Left lung (tissue), 14 donors: ENCODE measurements at regions of chr17 and their contacts with region 1.

Region 1: GRCh38 chr17:67386965-67387551 is 10.0 kb downstream of the PITPNC1 start:
- DNase-seq: peak in 2 of 4 donors; percentile 59 to 87
- ATAC-seq: peak; percentile 77
- H3K4me3 ChIP-seq: no peak overlapping the region
- H3K27ac ChIP-seq: no peak overlapping the region
- H3K4me1 ChIP-seq: peaks cover 0 to 22% of the 10 kb centered on the region in 2 donors
- H3K27me3 ChIP-seq: no peaks in the 10 kb centered on the region
- CTCF ChIP-seq: peak; percentile 60 to 66

Region 2: DNA sequence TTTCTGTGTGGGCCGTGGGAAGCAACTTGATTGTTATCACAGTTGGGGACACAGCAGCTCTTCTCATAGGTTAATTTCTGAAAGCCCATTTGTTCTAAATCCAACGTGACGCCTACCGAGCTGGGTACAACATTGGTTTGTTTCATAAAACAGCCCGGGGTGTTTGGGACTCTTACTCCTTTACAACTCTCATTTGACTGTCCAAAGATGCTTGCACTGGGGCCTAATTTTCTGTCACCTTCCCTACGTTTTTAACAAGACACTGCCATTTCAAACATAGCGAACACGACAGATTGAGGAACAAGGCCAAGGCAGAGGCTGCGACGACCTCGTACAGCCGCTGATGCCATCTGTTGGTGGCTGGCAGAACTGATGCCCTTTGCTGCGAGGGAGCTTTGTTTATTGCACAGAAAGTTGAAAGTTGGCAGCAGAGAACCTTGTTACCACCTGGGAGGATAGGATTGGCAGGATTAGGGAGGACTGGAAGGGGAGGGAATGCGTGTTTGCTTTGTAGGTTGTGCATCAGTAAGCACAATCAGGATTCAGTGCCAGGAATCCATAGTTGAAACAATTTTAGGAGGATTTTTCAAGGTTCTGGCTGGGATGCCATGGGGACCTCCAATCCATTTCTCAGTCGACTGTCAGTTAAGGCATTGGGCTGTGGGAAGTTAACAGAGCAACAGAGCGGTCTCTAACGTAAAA is 88.3 kb after region 1 on chr17:
- intact Hi-C with region 1: loop called in 1 of 2 experiments (anchors 5 kb)
- DNase-seq: peak; percentile 42 to 87 (median 79)
- ATAC-seq: peak; percentile 98
- H3K4me3 ChIP-seq: no peak overlapping the region
- H3K27ac ChIP-seq: peak overlapping the region in 1 of 2 donors; percentile 20
- H3K4me1 ChIP-seq: peaks cover 0 to 40% of the 10 kb centered on the region in 2 donors
- H3K27me3 ChIP-seq: no peaks in the 10 kb centered on the region
- CTCF ChIP-seq: peak; percentile 83 to 86